CD14-positive monocyte (primary cell): ENCODE measurements at regions of chr1 and their contacts with region 1.

Region 1: GRCh38 chr1:204989266-204990058 is 53.5 kb upstream of the CNTN2 start:
- DNase-seq: peak; percentile 56 to 71 (median 67)
- H3K4me3 ChIP-seq: no peak overlapping the region
- H3K4me3 Mint-ChIP-seq: no peak overlapping the region
- H3K27ac ChIP-seq: no peak overlapping the region
- H3K27ac Mint-ChIP-seq: no peak overlapping the region
- H3K4me1 ChIP-seq: peaks cover 21 to 24% of the 10 kb centered on the region in 2 donors
- H3K4me1 Mint-ChIP-seq: peaks cover 33% of the 10 kb centered on the region
- H3K27me3 ChIP-seq: no peaks in the 10 kb centered on the region
- H3K27me3 Mint-ChIP-seq: peaks cover 1 to 3% (median 2%) of the 10 kb centered on the region in 3 donors
- CTCF ChIP-seq: peak; percentile 96

Region 2: DNA sequence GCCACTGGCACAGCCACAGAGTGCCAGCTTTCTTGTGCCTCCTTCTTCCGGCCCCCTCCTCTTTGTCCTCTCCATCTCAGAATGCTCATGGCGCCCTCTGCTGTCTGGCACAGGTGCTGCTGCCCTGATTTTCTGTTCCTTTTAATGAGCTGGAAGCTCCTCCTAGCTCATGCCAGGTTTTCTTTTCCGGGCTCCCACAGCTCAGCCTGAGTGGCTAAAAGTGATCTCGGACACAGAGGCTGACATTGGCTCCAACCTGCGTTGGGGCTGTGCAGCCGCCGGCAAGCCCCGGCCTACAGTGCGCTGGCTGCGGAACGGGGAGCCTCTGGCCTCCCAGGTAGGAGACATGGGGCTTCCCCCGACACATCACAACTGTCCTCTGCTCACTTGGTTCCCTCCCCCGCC is 72.2 kb after region 1 on chr1:
- intact Hi-C with region 1: loop called (anchors 1 to 2 kb)
- DNase-seq: peak; percentile 53 to 63 (median 59)
- H3K4me3 ChIP-seq: no peak overlapping the region
- H3K4me3 Mint-ChIP-seq: no peak overlapping the region
- H3K27ac ChIP-seq: no peak overlapping the region
- H3K27ac Mint-ChIP-seq: no peak overlapping the region
- H3K4me1 ChIP-seq: no peaks in the 10 kb centered on the region
- H3K4me1 Mint-ChIP-seq: no peaks in the 10 kb centered on the region
- H3K27me3 ChIP-seq: no peaks in the 10 kb centered on the region
- H3K27me3 Mint-ChIP-seq: peaks cover 0 to 4% (median 0%) of the 10 kb centered on the region in 3 donors
- CTCF ChIP-seq: peak; percentile 91

Region 3: GRCh38 chr1:205141236-205142101 is 152.0 kb after region 1 on chr1:
- intact Hi-C with region 1: loop called (anchors 10 kb)
- DNase-seq: peak; percentile 61 to 70 (median 66)
- H3K4me3 ChIP-seq: no peak overlapping the region
- H3K4me3 Mint-ChIP-seq: peak overlapping the region in 1 of 2 donors; percentile 76
- H3K27ac ChIP-seq: no peak overlapping the region
- H3K27ac Mint-ChIP-seq: peak overlapping the region in 1 of 7 donors; percentile 46
- H3K4me1 ChIP-seq: peaks cover 15 to 16% of the 10 kb centered on the region in 2 donors
- H3K4me1 Mint-ChIP-seq: peaks cover 20% of the 10 kb centered on the region
- H3K27me3 ChIP-seq: no peaks in the 10 kb centered on the region
- H3K27me3 Mint-ChIP-seq: peaks cover 0 to 2% (median 2%) of the 10 kb centered on the region in 3 donors
- CTCF ChIP-seq: peak; percentile 82

Region 4: DNA sequence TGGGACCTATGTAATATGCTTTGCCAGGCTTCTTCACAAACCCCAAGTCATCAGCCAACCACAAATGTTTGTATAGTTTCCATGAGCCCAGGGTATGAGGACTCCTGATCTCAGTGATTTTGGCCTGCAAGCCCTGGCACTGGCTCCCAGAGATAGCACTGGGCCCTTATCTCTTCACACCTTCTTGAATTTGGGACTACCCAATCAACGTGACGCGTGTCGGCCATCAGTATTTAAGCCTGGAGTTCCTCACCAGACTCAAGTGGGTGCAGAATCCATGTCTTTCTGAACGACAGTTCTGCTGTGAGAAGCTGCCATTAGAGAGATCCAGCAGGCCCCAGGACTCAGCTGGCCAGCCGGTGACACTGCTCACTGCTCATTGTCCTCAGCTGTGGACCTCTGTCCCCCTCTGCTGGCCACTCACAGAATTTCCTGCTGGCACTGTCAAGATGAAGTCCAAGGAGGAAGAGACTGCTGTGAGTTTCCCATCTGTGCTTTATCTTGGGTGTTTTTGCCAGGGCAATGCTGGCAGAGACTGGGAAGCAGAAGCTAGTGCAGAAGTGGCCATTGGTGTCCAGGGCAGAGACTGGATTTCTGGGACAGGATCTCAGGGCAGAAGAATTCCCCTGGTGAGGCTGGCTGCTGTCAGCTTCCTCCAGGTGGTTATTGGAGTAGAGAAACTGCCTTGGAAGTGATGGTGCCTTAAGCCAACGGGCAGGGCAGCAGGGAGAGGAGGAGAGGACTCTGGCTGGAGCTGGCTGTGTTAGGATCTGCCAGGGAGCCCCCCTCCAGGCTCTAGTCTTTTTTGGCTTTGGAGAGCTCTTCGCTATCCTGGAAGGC is 266.7 kb after region 1 on chr1:
- intact Hi-C with region 1: loop called (anchors 5 kb)
- DNase-seq: peak; percentile 80 to 85 (median 84)
- H3K4me3 ChIP-seq: no peak overlapping the region
- H3K4me3 Mint-ChIP-seq: no peak overlapping the region
- H3K27ac ChIP-seq: no peak overlapping the region
- H3K27ac Mint-ChIP-seq: no peak overlapping the region
- H3K4me1 ChIP-seq: peaks cover 8 to 17% of the 10 kb centered on the region in 2 donors
- H3K4me1 Mint-ChIP-seq: peaks cover 16% of the 10 kb centered on the region
- H3K27me3 ChIP-seq: no peaks in the 10 kb centered on the region
- H3K27me3 Mint-ChIP-seq: peaks cover 0 to 6% (median 5%) of the 10 kb centered on the region in 3 donors
- CTCF ChIP-seq: peak; percentile 85

Region 5: GRCh38 chr1:205313563-205314308 is 324.3 kb after region 1 on chr1:
- intact Hi-C with region 1: no loop called
- DNase-seq: peak; percentile 74 to 78 (median 77)
- H3K4me3 ChIP-seq: peak overlapping the region; percentile 19 to 65 (median 26)
- H3K4me3 Mint-ChIP-seq: peak overlapping the region; percentile 71 to 83
- H3K27ac ChIP-seq: peak overlapping the region; percentile 86 to 96
- H3K27ac Mint-ChIP-seq: peak overlapping the region; percentile 96 to 99 (median 98)
- H3K4me1 ChIP-seq: peaks cover 84 to 89% of the 10 kb centered on the region in 2 donors
- H3K4me1 Mint-ChIP-seq: peaks cover 89% of the 10 kb centered on the region
- H3K27me3 ChIP-seq: no peaks in the 10 kb centered on the region
- H3K27me3 Mint-ChIP-seq: peaks cover 0 to 2% (median 0%) of the 10 kb centered on the region in 3 donors
- CTCF ChIP-seq: no peak